Activated CD8-positive, alpha-beta memory T cell treated with anti-CD3 and anti-CD28 coated beads, Interleukin-2, amount 10 ng/mL, durations not matched to agents 7 days and 5 days (primary cell): ENCODE measurements at regions of chr9 and their contacts with region 1.

Region 1: GRCh38 chr9:133144137-133144903 is 19.4 kb downstream of the GBGT1 start:
- DNase-seq: peak; percentile 98
- ATAC-seq: peak; percentile 76
- H3K4me3 Mint-ChIP-seq: peak overlapping the region; percentile 70
- H3K27ac Mint-ChIP-seq: peak overlapping the region; percentile 92
- H3K4me1 Mint-ChIP-seq: peaks cover 75% of the 10 kb centered on the region
- H3K27me3 Mint-ChIP-seq: no peaks in the 10 kb centered on the region

Region 2: DNA sequence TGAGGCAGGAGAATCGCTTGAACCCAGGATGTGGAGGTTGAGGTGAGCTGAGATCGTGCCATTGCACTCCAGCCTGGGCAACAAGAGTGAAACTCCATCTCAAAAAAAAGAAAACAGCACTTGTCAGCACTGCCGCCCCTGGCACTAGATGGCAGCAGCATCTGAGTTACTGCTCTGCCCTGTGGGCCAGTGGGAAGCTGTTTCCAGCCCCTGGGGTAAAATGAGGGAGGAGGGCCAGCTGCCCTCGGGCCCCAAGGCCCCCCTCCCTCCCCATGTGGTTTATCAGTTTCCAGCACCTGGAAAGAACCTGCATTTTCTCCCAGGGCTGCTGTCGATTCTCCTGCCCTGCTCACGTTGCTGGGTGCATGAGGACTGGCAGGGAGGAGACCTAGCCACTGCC is 95.8 kb before region 1 on chr9:
- CTCF ChIA-PET with region 1: interaction called, 25 read pairs
- DNase-seq: peak; percentile 64
- ATAC-seq: peak; percentile 79
- H3K4me3 Mint-ChIP-seq: no peak overlapping the region
- H3K27ac Mint-ChIP-seq: no peak overlapping the region
- H3K4me1 Mint-ChIP-seq: peaks cover 9% of the 10 kb centered on the region
- H3K27me3 Mint-ChIP-seq: no peaks in the 10 kb centered on the region

Region 3: GRCh38 chr9:133060417-133060841 is 83.9 kb before region 1 on chr9:
- CTCF ChIA-PET with region 1: interaction called, 28 read pairs
- DNase-seq: no peak
- ATAC-seq: peak; percentile 37
- H3K4me3 Mint-ChIP-seq: no peak overlapping the region
- H3K27ac Mint-ChIP-seq: peak overlapping the region; percentile 81
- H3K4me1 Mint-ChIP-seq: peaks cover 50% of the 10 kb centered on the region
- H3K27me3 Mint-ChIP-seq: no peaks in the 10 kb centered on the region

Region 4: GRCh38 chr9:133094842-133095393 is 49.4 kb before region 1 on chr9:
- CTCF ChIA-PET with region 1: interaction called, 505 read pairs
- DNase-seq: no peak
- ATAC-seq: no peak
- H3K4me3 Mint-ChIP-seq: no peak overlapping the region
- H3K27ac Mint-ChIP-seq: no peak overlapping the region
- H3K4me1 Mint-ChIP-seq: peaks cover 6% of the 10 kb centered on the region
- H3K27me3 Mint-ChIP-seq: no peaks in the 10 kb centered on the region

Region 5: GRCh38 chr9:133320421-133320881 is 176.1 kb after region 1 on chr9:
- CTCF ChIA-PET with region 1: no interaction called
- DNase-seq: no peak
- ATAC-seq: no peak
- H3K4me3 Mint-ChIP-seq: no peak overlapping the region
- H3K27ac Mint-ChIP-seq: no peak overlapping the region
- H3K4me1 Mint-ChIP-seq: no peaks in the 10 kb centered on the region
- H3K27me3 Mint-ChIP-seq: no peaks in the 10 kb centered on the region

Region 6: GRCh38 chr9:133331221-133331620 is 186.9 kb after region 1 on chr9:
- CTCF ChIA-PET with region 1: no interaction called
- DNase-seq: no peak
- ATAC-seq: no peak
- H3K4me3 Mint-ChIP-seq: no peak overlapping the region
- H3K27ac Mint-ChIP-seq: no peak overlapping the region
- H3K4me1 Mint-ChIP-seq: peaks cover 26% of the 10 kb centered on the region
- H3K27me3 Mint-ChIP-seq: no peaks in the 10 kb centered on the region